CD4-positive, alpha-beta T cell (primary cell): ENCODE measurements at regions of chr17 and their contacts with region 1.

Region 1: DNA sequence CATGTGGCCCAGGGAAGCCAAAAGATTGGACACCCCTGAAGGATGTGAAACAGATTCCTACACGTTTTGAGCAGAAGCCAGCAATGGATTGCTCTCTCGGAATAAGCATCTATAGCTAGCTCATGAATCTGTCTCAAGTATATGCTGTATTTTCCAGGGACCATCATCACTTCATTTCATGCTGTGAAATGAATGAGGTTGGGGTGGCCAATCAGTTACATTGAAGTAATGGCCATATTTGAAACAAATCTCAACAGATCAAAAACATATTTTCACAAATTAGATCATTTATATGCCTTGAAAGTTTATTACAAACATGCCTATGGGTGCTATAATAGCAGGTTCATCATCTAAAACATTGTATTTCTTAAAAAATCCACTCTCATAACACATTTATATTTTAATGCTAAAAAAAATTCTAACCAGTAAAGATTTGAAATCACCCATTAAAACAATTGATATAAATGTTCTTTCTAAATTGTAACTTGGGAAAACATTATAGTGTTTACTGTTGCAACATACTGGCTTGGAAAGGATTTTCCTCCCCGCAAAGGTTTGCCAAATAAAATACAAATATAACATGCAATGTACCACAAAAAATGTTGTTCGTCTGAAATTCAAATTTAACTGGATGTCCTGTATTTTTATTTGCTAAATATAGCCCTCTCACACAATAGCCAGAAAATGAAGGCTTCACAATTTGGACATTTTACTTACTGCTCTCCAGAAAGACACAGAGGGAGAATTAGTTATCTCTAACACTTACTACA is 743.6 kb downstream of the KCNJ2 start:
- DNase-seq: no peak
- ATAC-seq: no peak
- H3K4me3 ChIP-seq: no peak overlapping the region
- H3K4me3 Mint-ChIP-seq: no peak overlapping the region
- H3K27ac ChIP-seq: no peak overlapping the region
- H3K27ac Mint-ChIP-seq: no peak overlapping the region
- H3K4me1 ChIP-seq: no peaks in the 10 kb centered on the region
- H3K4me1 Mint-ChIP-seq: no peaks in the 10 kb centered on the region
- H3K27me3 ChIP-seq: no peaks in the 10 kb centered on the region
- H3K27me3 Mint-ChIP-seq: no peaks in the 10 kb centered on the region
- CTCF ChIP-seq: no peak

Region 2: DNA sequence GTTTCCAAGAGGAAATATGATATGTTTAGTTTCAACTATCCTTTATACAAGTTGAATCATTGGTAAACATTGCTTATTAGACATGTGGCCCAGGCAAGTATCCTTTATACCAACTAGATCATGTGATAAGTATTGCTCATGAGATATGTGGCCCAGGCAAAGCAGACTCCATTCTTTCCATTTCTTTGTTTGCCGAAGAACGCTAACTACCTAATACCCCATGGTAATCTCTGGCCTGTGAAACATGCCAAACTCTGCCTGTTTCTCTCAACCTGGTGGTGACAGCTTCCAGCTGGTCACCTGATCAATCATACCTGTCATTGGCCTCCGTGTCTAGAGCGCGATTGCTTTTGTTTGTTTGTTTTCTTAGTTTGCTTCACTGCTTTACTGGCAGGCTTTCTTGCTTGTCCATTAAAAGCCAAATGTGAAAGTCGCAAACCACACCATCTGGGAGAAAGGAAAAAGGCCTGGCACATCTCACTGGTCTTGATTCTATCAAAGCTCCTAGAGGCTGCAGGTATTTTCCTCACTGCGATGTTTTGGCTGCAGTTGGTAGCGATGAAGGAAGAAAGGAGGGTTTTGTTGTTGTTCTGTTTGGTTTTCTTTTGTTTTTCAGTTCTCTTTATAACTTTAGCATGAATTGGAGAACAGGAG is 57.4 kb before region 1 on chr17:
- CTCF ChIA-PET with region 1: no interaction called
- POLR2A ChIA-PET with region 1: no interaction called
- intact Hi-C with region 1: loop called in 1 of 2 experiments (anchors 10 kb)
- DNase-seq: no peak
- ATAC-seq: no peak
- H3K4me3 ChIP-seq: no peak overlapping the region
- H3K4me3 Mint-ChIP-seq: no peak overlapping the region
- H3K27ac ChIP-seq: no peak overlapping the region
- H3K27ac Mint-ChIP-seq: no peak overlapping the region
- H3K4me1 ChIP-seq: no peaks in the 10 kb centered on the region
- H3K4me1 Mint-ChIP-seq: no peaks in the 10 kb centered on the region
- H3K27me3 ChIP-seq: no peaks in the 10 kb centered on the region
- H3K27me3 Mint-ChIP-seq: no peaks in the 10 kb centered on the region
- CTCF ChIP-seq: no peak